HEK293 (cell line): ENCODE measurements at regions of chr6 and their contacts with region 1.

Region 1: GRCh38 chr6:38493931-38494547 is 145.7 kb downstream of the BTBD9 start:
- H3K4me3 ChIP-seq: no peak overlapping the region
- H3K27ac ChIP-seq: no peak overlapping the region
- H3K4me1 ChIP-seq: no peaks in the 10 kb centered on the region
- CTCF ChIP-seq: peak; percentile 36; the same call in 1 of the 2 replicates

Region 2: DNA sequence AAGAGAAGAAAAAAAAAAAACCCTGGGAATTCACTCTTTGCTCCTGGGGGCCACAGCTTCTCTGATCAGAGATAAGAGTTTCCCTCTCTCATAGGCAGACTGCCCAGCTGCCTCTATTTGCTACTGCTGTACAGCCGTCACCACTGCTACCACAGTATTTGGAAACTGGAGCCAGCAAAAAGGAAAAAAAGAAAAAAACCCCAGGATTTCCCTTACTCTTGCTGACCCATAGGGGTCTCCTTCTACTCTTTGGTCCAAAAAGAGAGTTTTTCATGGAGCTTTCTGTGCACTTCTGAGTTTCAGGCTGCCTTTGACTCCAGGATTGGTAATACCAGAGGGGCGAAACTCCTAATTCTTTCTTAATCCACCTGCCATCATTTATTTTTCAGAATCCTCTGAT is 886.1 kb before region 1 on chr6:
- CTCF ChIA-PET with region 1: interaction called, 13 read pairs
- POLR2A ChIA-PET with region 1: no interaction called
- H3K4me3 ChIP-seq: no peak overlapping the region
- H3K27ac ChIP-seq: no peak overlapping the region
- H3K4me1 ChIP-seq: no peaks in the 10 kb centered on the region
- CTCF ChIP-seq: no peak

Region 3: GRCh38 chr6:38034274-38034914 is 459.6 kb before region 1 on chr6:
- CTCF ChIA-PET with region 1: interaction called, 31 read pairs
- POLR2A ChIA-PET with region 1: no interaction called
- H3K4me3 ChIP-seq: no peak overlapping the region
- H3K27ac ChIP-seq: no peak overlapping the region
- H3K4me1 ChIP-seq: peaks cover 5% of the 10 kb centered on the region; the same call in 1 of the 2 replicates
- CTCF ChIP-seq: 0 out of 2 replicates have a peak, but pooled peaks have one; percentile 38

Region 4: GRCh38 chr6:38477680-38478260 is 16.3 kb before region 1 on chr6:
- CTCF ChIA-PET with region 1: interaction called, 41 read pairs
- POLR2A ChIA-PET with region 1: no interaction called
- H3K4me3 ChIP-seq: no peak overlapping the region
- H3K27ac ChIP-seq: no peak overlapping the region
- H3K4me1 ChIP-seq: no peaks in the 10 kb centered on the region; the same call in 1 of the 2 replicates
- CTCF ChIP-seq: no peak

Region 5: DNA sequence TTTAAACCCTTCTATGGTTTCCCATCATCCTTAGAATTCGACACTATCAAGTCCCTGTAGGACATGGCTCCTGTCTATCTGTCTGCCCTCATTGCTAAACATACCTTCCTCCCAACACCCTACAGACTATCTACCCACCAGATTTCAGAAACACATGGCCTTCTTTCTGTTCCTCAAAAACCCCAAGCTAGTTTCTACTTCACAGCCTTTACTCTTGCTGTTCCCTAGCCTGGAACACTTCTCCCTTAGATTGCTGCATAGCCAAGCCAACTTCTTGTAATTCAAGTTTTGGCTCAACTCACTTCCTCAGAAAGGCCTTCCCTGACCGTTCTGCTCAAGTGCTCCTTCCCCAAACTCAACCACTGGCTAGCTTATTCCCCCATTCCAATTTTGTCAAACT is 10.5 kb before region 1 on chr6:
- CTCF ChIA-PET with region 1: interaction called, 41 read pairs
- POLR2A ChIA-PET with region 1: no interaction called
- H3K4me3 ChIP-seq: no peak overlapping the region
- H3K27ac ChIP-seq: no peak overlapping the region
- H3K4me1 ChIP-seq: no peaks in the 10 kb centered on the region
- CTCF ChIP-seq: no peak

Region 6: GRCh38 chr6:38508894-38509293 is 14.9 kb after region 1 on chr6:
- CTCF ChIA-PET with region 1: interaction called, 22 read pairs
- POLR2A ChIA-PET with region 1: interaction called, 4 read pairs
- H3K4me3 ChIP-seq: no peak overlapping the region
- H3K27ac ChIP-seq: no peak overlapping the region; the same call in 1 of the 2 replicates
- H3K4me1 ChIP-seq: peaks cover 18% of the 10 kb centered on the region
- CTCF ChIP-seq: no peak

Region 7: GRCh38 chr6:38531134-38531533 is 37.1 kb after region 1 on chr6:
- CTCF ChIA-PET with region 1: no interaction called
- POLR2A ChIA-PET with region 1: no interaction called
- H3K4me3 ChIP-seq: no peak overlapping the region
- H3K27ac ChIP-seq: no peak overlapping the region
- H3K4me1 ChIP-seq: no peaks in the 10 kb centered on the region
- CTCF ChIP-seq: no peak

Region 8: GRCh38 chr6:38570750-38571149 is 76.7 kb after region 1 on chr6:
- CTCF ChIA-PET with region 1: interaction called, 25 read pairs
- POLR2A ChIA-PET with region 1: no interaction called
- H3K4me3 ChIP-seq: no peak overlapping the region
- H3K27ac ChIP-seq: no peak overlapping the region
- H3K4me1 ChIP-seq: peaks cover 7% of the 10 kb centered on the region; the same call in 1 of the 2 replicates
- CTCF ChIP-seq: 0 out of 2 replicates have a peak, but pooled peaks have one; percentile 20